ENCODE measurements at regions of chr6 and their contacts with region 1.

Region 1: DNA sequence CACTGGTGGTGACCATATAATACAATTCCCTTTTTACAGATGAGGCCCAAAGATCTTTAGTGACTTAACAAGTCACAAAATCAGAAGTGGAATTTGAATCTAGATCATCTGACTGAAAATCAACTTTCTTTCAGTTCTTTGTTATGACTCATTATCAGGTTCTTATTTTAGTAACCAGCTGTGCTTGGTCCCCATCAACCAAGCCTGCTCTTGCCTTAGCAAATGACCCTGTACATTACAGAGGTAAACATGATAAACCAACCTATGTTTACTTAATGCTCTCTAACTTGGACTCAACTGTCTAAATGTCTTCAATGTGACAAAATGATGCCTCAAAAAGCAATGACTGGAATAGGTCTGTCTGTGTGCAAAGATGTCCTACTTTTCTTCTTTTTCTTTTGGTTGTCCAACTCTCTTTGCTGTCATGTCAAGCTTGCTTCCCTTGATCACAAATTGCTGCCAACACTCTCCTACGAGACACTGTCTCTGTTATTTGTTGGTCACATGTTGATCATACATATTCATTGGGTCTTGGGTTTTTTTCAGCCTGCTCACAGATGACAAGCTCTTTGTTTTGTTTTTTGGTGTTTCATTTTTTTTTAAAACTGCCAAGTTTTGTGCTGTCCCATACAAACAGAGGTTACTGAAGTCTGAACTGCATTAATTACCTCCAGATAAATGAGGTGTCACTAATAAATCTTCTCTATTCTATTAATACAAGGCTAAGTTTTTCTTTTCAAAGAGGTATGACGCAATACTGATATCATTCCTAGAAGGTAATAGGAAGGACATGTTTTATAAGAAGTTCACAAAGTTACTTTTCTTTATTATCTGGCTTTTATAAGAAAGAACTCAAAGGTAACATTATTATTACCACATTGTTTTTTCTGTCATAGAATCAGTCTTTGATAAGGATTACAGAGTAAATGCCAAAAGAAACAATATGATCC is 62.2 kb upstream of the PLN start:
- DNase-seq: peak; percentile 18
- H3K4me3 Mint-ChIP-seq: no peak overlapping the region
- H3K27ac Mint-ChIP-seq: no peak overlapping the region
- H3K4me1 Mint-ChIP-seq: peaks cover 23% of the 10 kb centered on the region
- H3K27me3 Mint-ChIP-seq: no peaks in the 10 kb centered on the region

Region 2: DNA sequence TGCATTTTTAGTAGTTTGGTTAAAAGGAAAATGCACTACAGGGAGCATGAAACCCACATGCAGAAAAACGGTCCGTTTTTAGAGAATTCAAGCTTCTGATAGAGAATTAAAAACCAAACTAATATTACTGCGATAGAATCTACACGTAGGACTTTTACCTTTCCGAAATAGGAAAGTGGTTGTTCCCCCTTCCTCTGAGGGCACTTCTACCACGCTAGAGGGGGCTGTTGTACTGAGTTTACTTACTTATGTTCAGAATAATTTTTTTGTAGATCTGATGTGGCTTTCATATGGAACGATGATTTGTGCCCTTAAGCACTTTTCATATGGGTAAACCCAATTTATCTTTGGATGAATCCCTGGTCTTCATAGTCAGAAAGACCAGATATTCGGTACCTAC is 202.1 kb before region 1 on chr6:
- CTCF ChIA-PET with region 1: no interaction called
- POLR2A ChIA-PET with region 1: no interaction called
- intact Hi-C with region 1: loop called (anchors 10 kb)
- DNase-seq: peak; percentile 39
- H3K4me3 Mint-ChIP-seq: no peak overlapping the region
- H3K27ac Mint-ChIP-seq: no peak overlapping the region
- H3K4me1 Mint-ChIP-seq: no peaks in the 10 kb centered on the region
- H3K27me3 Mint-ChIP-seq: no peaks in the 10 kb centered on the region

Region 3: GRCh38 chr6:118467181-118467580 is 18.7 kb before region 1 on chr6:
- CTCF ChIA-PET with region 1: no interaction called
- POLR2A ChIA-PET with region 1: no interaction called
- intact Hi-C with region 1: loop called (anchors 1 kb)
- DNase-seq: no peak
- H3K4me3 Mint-ChIP-seq: no peak overlapping the region
- H3K27ac Mint-ChIP-seq: peak overlapping the region; percentile 38
- H3K4me1 Mint-ChIP-seq: peaks cover 15% of the 10 kb centered on the region
- H3K27me3 Mint-ChIP-seq: no peaks in the 10 kb centered on the region

Region 4: DNA sequence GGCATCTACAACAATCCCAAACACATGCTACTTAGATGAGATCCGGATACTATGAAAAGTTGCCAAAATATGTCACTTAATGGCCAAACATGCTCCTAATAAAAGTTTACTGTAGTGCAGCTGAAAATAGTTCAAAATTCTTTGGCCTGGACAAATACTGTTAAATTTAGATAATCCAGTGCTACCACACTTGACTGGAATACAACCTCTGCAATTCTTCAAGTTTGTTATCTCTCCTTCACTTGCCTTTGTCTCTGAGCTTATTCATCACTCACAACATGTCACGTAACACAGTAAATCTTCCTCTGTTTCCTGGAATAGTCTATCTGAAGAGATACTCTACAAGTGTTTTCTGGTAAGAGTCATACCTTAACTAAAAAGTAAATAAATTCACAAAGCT is 51.7 kb after region 1 on chr6:
- CTCF ChIA-PET with region 1: no interaction called
- POLR2A ChIA-PET with region 1: no interaction called
- intact Hi-C with region 1: loop called (anchors 5 kb)
- DNase-seq: no peak
- H3K4me3 Mint-ChIP-seq: no peak overlapping the region
- H3K27ac Mint-ChIP-seq: no peak overlapping the region
- H3K4me1 Mint-ChIP-seq: peaks cover 24% of the 10 kb centered on the region
- H3K27me3 Mint-ChIP-seq: no peaks in the 10 kb centered on the region

Region 5: DNA sequence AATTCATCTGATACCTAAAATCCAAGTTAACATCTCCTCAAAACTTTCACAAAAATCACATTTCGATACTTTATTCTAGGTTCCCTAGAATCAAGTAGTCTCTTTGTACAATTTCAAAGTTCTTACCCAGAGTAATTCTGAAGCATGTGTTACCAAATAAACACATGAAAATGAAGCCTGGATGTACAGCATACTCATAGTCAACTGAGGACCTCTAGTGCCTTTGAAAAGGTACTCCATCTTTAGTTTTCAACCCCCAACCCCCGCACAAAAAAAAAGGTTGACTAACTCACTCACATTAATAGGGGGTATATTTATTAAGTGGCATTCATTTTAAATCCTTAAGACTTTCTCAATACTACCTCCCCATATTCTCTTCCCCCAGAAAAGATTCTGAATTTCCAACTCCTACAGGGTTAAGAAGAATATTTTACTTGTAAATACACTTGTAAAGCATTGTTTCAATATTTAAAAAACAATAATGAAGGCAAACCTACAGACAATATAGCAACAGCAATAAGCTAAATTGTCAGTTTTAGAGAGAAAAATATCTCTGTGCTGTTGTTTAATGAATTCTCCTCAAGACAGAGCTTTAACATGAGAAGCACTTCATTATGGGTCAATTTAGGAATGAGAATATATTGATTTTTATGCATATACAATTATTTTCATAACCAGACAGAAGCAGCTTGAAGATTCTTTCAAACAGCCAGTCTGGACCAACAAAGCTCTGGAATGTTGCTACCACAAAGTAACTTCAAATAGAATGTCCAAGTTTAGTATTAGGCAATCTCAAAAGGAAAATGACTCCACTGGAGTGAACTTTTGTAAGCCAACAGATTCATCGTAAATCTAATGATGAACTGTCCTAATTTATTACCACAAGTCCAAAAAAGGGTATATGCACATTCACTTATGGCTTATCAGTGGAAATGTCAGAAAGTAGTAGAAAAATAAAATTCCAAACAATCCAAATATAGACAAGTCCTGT is 65.5 kb after region 1 on chr6:
- CTCF ChIA-PET with region 1: no interaction called
- POLR2A ChIA-PET with region 1: no interaction called
- intact Hi-C with region 1: loop called (anchors 5 kb)
- DNase-seq: no peak
- H3K4me3 Mint-ChIP-seq: no peak overlapping the region
- H3K27ac Mint-ChIP-seq: no peak overlapping the region
- H3K4me1 Mint-ChIP-seq: peaks cover 27% of the 10 kb centered on the region
- H3K27me3 Mint-ChIP-seq: no peaks in the 10 kb centered on the region

Measured in activated CD4-positive, alpha-beta memory T cell treated with anti-CD3 and anti-CD28 coated beads for 36 hours (primary cell).